ENCODE measurements at regions of chr17 and their contacts with region 1.

Region 1: DNA sequence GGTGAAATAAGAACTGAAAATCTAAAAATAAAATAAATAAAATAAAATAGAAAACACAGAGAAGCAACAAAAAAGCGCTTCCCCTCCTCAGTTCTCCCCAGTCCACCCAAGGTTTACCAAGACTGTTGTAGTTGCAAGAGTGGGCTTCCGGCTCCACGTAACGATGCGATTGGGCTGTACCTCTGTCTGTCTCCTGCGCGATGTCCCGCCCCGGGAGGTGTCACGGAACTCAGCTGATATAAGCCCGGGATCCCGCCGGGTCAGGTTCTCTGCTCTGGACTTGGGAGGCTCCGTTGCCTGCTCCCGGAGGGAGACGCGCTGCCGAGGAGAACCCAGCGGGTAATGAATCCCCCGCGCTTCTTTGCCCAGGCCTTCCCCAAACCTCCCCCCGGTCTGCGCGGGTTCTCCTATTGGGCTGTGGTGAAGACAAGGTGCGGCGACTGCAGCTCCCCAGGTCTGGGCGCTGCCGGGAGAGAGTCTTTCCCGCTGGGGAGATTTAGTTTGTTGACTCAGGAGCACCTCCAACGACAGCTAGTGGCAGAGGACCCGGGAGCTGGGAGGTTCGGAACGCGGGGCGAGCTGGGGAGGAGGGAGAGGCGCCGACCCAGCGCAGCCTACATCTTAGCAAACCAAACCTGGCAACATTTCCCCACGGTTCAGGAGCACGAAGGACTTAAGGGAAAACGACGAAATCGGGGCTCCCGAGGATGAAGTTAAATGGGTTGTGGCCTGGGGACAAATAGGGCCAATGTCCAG is at the start of gene SLFN5:
- DNase-seq: peak; percentile 96
- H3K4me3 Mint-ChIP-seq: peak within 1 kb of the TSS; percentile 95
- H3K27ac Mint-ChIP-seq: peak within 1 kb of the TSS; percentile 96
- H3K4me1 Mint-ChIP-seq: peaks cover 60% of the 10 kb centered on the region
- H3K27me3 Mint-ChIP-seq: no peaks in the 10 kb centered on the region
- total RNA-seq, gene SLFN5: 231 to 240 TPM

Region 2: DNA sequence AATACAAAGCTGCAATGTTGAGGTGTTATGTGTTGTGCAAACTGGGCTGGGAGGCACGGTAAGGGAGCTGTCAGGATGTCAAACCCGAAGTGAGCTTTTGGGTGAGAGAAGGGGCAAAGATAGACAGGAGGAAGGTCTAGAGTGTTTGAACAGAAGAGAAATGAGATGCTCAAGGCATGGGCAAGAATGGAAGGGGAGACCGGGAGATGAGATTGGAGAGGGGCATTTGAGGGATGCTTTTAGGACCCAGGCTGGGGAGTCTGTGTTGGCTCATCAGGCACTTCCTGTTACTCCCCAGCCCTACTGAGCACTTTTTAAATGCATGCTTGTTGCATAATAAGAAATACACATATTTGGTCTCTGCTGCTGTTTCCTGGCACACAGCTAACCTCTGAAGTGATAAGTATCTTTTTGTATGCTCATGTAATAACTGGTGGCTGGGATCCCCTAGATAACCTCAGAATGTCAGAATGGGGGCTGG is 81.7 kb before region 1 on chr17:
- CTCF ChIA-PET with region 1: no interaction called
- POLR2A ChIA-PET with region 1: interaction called, 19 read pairs
- DNase-seq: peak; percentile 32
- H3K4me3 Mint-ChIP-seq: peak overlapping the region; percentile 22
- H3K27ac Mint-ChIP-seq: peak overlapping the region; percentile 77
- H3K4me1 Mint-ChIP-seq: peaks cover 43% of the 10 kb centered on the region
- H3K27me3 Mint-ChIP-seq: peaks cover 2% of the 10 kb centered on the region

Region 3: GRCh38 chr17:35227546-35227945 is 15.4 kb before region 1 on chr17:
- CTCF ChIA-PET with region 1: interaction called, 4 read pairs
- POLR2A ChIA-PET with region 1: interaction called, 152 read pairs
- DNase-seq: no peak
- H3K4me3 Mint-ChIP-seq: no peak overlapping the region
- H3K27ac Mint-ChIP-seq: no peak overlapping the region
- H3K4me1 Mint-ChIP-seq: peaks cover 7% of the 10 kb centered on the region
- H3K27me3 Mint-ChIP-seq: no peaks in the 10 kb centered on the region

Region 4: DNA sequence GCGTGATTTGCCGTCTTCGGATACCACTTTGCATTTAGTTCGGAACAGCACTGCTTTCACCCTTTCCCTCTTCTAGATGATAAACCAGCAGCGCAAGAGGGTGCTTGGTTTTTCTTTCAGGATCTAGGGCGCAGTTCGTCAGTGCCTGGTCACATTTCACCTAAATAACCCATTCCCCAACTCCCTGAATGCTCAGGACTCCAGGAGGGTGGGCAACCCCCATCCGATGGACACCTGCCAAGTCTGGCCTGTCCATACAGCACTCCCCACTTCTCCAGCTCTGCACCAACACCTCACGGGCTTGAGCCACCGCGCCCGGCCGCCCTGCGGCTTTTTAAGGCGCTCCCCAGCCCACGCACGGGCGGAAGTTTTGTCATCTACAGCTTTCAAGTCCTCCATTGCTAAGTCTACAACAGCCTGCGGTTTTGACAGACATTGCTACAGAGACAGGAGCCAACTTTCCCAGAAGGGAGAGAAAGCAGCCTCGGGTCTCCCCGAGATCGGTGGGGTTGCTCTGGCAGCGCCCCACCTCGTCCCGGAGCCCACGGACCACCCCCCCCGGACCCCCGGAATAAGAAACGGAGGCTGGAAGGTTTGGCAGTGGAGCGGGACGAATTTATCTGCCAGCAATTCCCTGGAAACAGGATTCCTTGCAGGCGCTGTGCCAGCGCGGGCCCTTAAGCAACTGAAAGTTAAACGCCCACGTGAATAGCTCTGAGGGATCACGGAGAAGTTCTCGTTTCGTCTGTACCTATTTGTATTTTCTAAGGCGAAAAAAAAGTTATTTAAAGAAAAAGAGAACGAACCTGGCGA is 244.1 kb after region 1 on chr17:
- CTCF ChIA-PET with region 1: no interaction called
- POLR2A ChIA-PET with region 1: interaction called, 14 read pairs
- DNase-seq: peak; percentile 76
- H3K4me3 Mint-ChIP-seq: peak overlapping the region; percentile 81
- H3K27ac Mint-ChIP-seq: peak overlapping the region; percentile 85
- H3K4me1 Mint-ChIP-seq: peaks cover 65% of the 10 kb centered on the region
- H3K27me3 Mint-ChIP-seq: no peaks in the 10 kb centered on the region

Region 5: GRCh38 chr17:35578197-35578928 is 335.4 kb after region 1 on chr17 and contains the start of gene PEX12:
- CTCF ChIA-PET with region 1: no interaction called
- POLR2A ChIA-PET with region 1: interaction called, 37 read pairs
- DNase-seq: peak; percentile 91
- H3K4me3 Mint-ChIP-seq: peak within 1 kb of the TSS; percentile 94
- H3K27ac Mint-ChIP-seq: peak within 1 kb of the TSS; percentile 94
- H3K4me1 Mint-ChIP-seq: peaks cover 29% of the 10 kb centered on the region
- H3K27me3 Mint-ChIP-seq: peaks cover under 1% of the 10 kb centered on the region
- total RNA-seq, gene PEX12: 3.8 to 4.5 TPM

Measured in activated CD4-positive, alpha-beta memory T cell treated with anti-CD3 and anti-CD28 coated beads, Interleukin-2, amount 10 ng/mL, durations not matched to agents 7 days and 5 days (primary cell).